ENCODE measurements at regions of chr7 and their contacts with region 1.

Region 1: GRCh38 chr7:80699045-80699638 is 60.7 kb downstream of the CD36 start:
- DNase-seq: peak in 1 of 2 experiments; percentile 62
- H3K4me3 ChIP-seq: no peak overlapping the region
- H3K27ac ChIP-seq: no peak overlapping the region
- H3K4me1 ChIP-seq: no peaks in the 10 kb centered on the region
- H3K27me3 ChIP-seq: no peaks in the 10 kb centered on the region
- CTCF ChIP-seq: peak; percentile 93

Region 2: GRCh38 chr7:80428161-80429054 is 270.7 kb before region 1 on chr7:
- CTCF ChIA-PET with region 1: no interaction called
- POLR2A ChIA-PET with region 1: no interaction called
- intact Hi-C with region 1: loop called (anchors 1 kb)
- DNase-seq: peak; percentile 35 to 50
- H3K4me3 ChIP-seq: no peak overlapping the region
- H3K27ac ChIP-seq: no peak overlapping the region
- H3K4me1 ChIP-seq: no peaks in the 10 kb centered on the region
- H3K27me3 ChIP-seq: no peaks in the 10 kb centered on the region
- CTCF ChIP-seq: peak; percentile 75

Region 3: DNA sequence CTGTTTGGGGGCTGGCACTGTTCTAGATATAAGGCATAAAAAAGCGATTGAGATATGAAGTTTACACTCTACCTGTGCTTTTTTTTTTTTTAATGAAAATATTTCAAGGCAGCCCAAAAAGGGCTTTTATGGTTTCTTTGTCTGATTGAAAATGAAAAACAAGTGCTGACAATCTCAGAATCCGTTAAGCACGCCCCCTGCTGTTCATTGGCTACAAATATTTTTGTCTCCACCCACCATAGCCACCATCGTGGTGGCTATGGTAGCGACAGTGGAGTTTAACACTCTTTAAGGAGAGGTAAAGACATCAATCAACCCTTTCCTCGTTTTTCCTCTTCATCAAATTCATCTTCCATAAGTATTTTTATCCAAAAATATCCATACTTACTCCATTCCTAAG is 33.5 kb after region 1 on chr7:
- CTCF ChIA-PET with region 1: no interaction called
- POLR2A ChIA-PET with region 1: no interaction called
- intact Hi-C with region 1: loop called (anchors 5 kb)
- DNase-seq: no peak
- H3K4me3 ChIP-seq: no peak overlapping the region
- H3K27ac ChIP-seq: no peak overlapping the region
- H3K4me1 ChIP-seq: 0 out of 2 replicates have a peak, but pooled peaks cover 7% of the 10 kb centered on the region
- H3K27me3 ChIP-seq: no peaks in the 10 kb centered on the region
- CTCF ChIP-seq: peak; percentile 49; the same call in 1 of the 2 replicates

Region 4: GRCh38 chr7:81447351-81447952 is 748.3 kb after region 1 on chr7:
- CTCF ChIA-PET with region 1: no interaction called
- POLR2A ChIA-PET with region 1: no interaction called
- intact Hi-C with region 1: loop called (anchors 1 kb)
- DNase-seq: peak in 1 of 2 experiments; percentile 12
- H3K4me3 ChIP-seq: no peak overlapping the region
- H3K27ac ChIP-seq: no peak overlapping the region
- H3K4me1 ChIP-seq: no peaks in the 10 kb centered on the region
- H3K27me3 ChIP-seq: no peaks in the 10 kb centered on the region
- CTCF ChIP-seq: peak; percentile 64

Region 5: DNA sequence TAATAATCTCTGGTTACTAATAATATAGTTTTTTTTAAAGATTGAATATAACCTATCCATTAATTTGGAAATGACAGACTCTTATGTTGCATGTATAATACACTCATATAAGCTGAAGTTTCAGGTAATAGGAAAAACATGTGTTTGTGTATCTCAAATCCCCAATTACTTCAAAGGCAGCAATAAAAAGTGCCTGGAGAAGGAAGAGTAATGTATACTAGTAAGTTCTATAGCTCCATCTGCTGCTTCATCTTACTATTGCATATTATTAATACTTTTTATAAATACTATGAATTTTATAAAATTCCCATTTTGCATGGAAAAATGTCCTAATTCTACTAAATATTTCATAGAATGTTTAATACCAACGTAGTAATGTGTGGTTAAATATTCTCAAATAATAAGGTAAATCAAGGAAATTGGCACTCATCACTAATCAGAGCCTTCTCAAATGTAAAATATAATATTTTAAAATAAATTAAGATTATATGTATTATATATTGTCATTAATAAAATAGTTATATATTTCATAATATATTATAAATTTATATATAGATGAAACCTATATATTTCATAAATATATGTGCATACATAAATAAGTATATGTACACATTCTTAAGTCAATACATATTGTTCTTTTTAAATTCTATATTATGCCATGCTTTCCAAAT is 758.8 kb after region 1 on chr7:
- CTCF ChIA-PET with region 1: interaction called, 4 read pairs
- POLR2A ChIA-PET with region 1: no interaction called
- intact Hi-C with region 1: loop called (anchors 2 kb)
- DNase-seq: peak in 1 of 2 experiments; percentile 38
- H3K4me3 ChIP-seq: no peak overlapping the region
- H3K27ac ChIP-seq: no peak overlapping the region
- H3K4me1 ChIP-seq: no peaks in the 10 kb centered on the region
- H3K27me3 ChIP-seq: no peaks in the 10 kb centered on the region
- CTCF ChIP-seq: peak; percentile 69

Region 6: GRCh38 chr7:81469869-81470723 is 771.0 kb after region 1 on chr7:
- CTCF ChIA-PET with region 1: interaction called, 8 read pairs
- POLR2A ChIA-PET with region 1: interaction called, 4 read pairs
- intact Hi-C with region 1: loop called (anchors 1 kb)
- DNase-seq: peak; percentile 50 to 65
- H3K4me3 ChIP-seq: no peak overlapping the region
- H3K27ac ChIP-seq: no peak overlapping the region
- H3K4me1 ChIP-seq: no peaks in the 10 kb centered on the region
- H3K27me3 ChIP-seq: no peaks in the 10 kb centered on the region
- CTCF ChIP-seq: peak; percentile 81